A549 (cell line): ENCODE measurements at regions of chr14 and their contacts with region 1.

Region 1: GRCh38 chr14:92951912-92952471 is 29.0 kb downstream of the CHGA start:
- DNase-seq: peak; percentile 70 to 84
- ATAC-seq: peak; percentile 93 to 97
- H3K4me3 ChIP-seq: no peak overlapping the region
- H3K27ac ChIP-seq: peak overlapping the region; percentile 61 to 64; a peak in 5 of 6 replicates
- H3K4me1 ChIP-seq: peaks cover 10% of the 10 kb centered on the region
- CTCF ChIP-seq: peak; percentile 95
- EP300 ChIP-seq: no peak
- POLR2A ChIP-seq: no peak
- RAD21 ChIP-seq: peak; percentile 98

Region 2: GRCh38 chr14:93027810-93028723 is 76.1 kb after region 1 on chr14:
- CTCF ChIA-PET with region 1: no interaction called
- POLR2A ChIA-PET with region 1: no interaction called
- DNase-seq: no peak
- ATAC-seq: no peak
- H3K4me3 ChIP-seq: no peak overlapping the region
- H3K27ac ChIP-seq: no peak overlapping the region
- H3K4me1 ChIP-seq: peaks cover 40% of the 10 kb centered on the region
- CTCF ChIP-seq: no peak
- EP300 ChIP-seq: no peak
- POLR2A ChIP-seq: no peak
- RAD21 ChIP-seq: no peak

Region 3: GRCh38 chr14:93103392-93104080 is 151.5 kb after region 1 on chr14:
- CTCF ChIA-PET with region 1: interaction called, 11 read pairs
- POLR2A ChIA-PET with region 1: no interaction called
- DNase-seq: no peak
- ATAC-seq: no peak
- H3K4me3 ChIP-seq: no peak overlapping the region
- H3K27ac ChIP-seq: 0 out of 6 replicates have a peak overlapping the region, but pooled peaks of 1 of the 2 experiments have one; percentile 23
- H3K4me1 ChIP-seq: peaks cover 18% of the 10 kb centered on the region
- CTCF ChIP-seq: no peak
- EP300 ChIP-seq: no peak
- POLR2A ChIP-seq: no peak
- RAD21 ChIP-seq: no peak

Region 4: GRCh38 chr14:93137864-93138263 is 185.9 kb after region 1 on chr14:
- CTCF ChIA-PET with region 1: interaction called, 57 read pairs
- POLR2A ChIA-PET with region 1: no interaction called
- DNase-seq: peak in 1 of 2 experiments; percentile 48
- ATAC-seq: peak; percentile 38 to 51; a peak in 3 of 6 replicates
- H3K4me3 ChIP-seq: no peak overlapping the region
- H3K27ac ChIP-seq: no peak overlapping the region
- H3K4me1 ChIP-seq: peaks cover 17% of the 10 kb centered on the region
- CTCF ChIP-seq: no peak
- EP300 ChIP-seq: no peak
- POLR2A ChIP-seq: no peak
- RAD21 ChIP-seq: no peak; a peak in 1 of 5 replicates

Region 5: DNA sequence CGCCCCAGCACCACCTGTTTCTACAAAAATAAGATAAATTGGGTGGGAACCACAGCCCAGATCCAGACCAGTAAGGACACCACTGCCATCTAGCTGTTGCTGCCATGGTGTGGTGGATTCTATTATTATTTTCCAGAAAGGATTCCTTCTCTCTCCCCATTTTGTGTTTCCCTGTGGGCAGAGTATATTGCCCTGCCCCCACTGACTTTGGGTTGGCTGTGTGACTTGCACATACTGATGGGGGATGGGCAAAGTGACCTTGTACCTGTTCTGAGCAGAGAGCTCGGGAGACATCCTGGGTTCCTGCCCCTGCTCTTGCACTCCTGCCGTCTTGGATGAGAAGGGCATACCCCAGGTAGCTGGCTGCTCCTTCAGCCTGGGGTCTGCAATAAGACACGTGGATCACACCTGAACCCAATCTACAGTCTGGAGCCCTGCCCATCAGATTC is 208.4 kb after region 1 on chr14:
- CTCF ChIA-PET with region 1: interaction called, 11 read pairs
- POLR2A ChIA-PET with region 1: no interaction called
- DNase-seq: peak; percentile 62 to 66
- ATAC-seq: peak; percentile 89 to 91
- H3K4me3 ChIP-seq: no peak overlapping the region
- H3K27ac ChIP-seq: no peak overlapping the region
- H3K4me1 ChIP-seq: 0 out of 3 replicates have a peak, but pooled peaks cover 3% of the 10 kb centered on the region
- CTCF ChIP-seq: peak; percentile 58
- EP300 ChIP-seq: no peak
- POLR2A ChIP-seq: no peak
- RAD21 ChIP-seq: peak; percentile 62 to 67; a peak in 4 of 5 replicates